ENCODE measurements at regions of chr3 and their contacts with region 1.

Region 1: DNA sequence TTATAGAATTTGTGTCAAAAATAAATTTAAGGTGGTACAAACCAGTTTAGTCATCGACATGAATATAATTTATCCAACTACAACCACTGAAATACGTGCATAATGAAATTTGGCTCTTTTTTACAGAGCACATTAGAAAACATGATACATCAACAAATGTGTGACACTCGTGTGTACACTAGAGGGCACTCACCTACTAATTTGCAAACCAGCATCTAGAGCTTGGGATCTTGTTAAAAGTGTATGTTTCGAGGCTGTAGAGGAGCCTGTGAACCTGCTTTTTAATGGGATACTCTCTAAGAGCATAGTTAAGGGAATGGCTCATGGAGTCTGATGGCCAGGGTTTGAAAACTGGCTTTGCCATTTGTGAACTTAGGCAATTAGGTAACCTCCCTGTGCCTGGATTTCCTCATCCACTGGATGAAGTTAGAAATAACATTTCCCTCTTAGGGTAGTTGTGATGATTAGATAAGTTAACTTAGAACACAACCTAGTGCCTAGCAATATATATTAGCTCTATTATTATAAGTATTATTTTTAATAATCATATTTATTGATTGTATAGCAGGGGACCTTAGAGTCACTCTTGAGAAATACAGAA is 8.8 kb upstream of the CPOX start:
- DNase-seq: no peak
- ATAC-seq: peak; percentile 63 to 88 (median 66)
- H3K4me3 ChIP-seq: no peak overlapping the region
- H3K27ac ChIP-seq: no peak overlapping the region
- H3K4me1 ChIP-seq: no peaks in the 10 kb centered on the region
- H3K27me3 ChIP-seq: no peaks in the 10 kb centered on the region
- CTCF ChIP-seq: peak; percentile 74

Region 2: DNA sequence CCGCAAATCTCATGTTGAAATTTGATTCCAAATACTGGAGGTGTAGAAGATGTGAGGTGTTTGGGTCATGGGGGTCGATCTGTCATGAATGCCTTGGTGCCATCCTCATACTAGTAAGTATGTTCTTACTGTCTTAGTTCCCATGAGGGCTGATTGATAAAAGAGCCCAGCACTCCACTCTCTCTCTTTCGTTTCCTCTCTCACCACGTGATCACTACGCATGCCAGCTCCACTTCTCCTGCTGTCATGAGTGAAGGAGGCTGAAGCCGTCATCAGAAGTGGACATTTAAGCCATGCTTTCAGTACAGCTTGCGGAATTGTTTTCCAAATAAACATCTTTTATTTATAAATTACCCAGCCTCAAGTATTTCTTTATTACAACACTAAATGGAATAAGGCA is 429.6 kb before region 1 on chr3:
- intact Hi-C with region 1: no loop called
- DNase-seq: no peak
- ATAC-seq: no peak
- H3K4me3 ChIP-seq: no peak overlapping the region
- H3K27ac ChIP-seq: no peak overlapping the region
- H3K4me1 ChIP-seq: no peaks in the 10 kb centered on the region
- H3K27me3 ChIP-seq: no peaks in the 10 kb centered on the region
- CTCF ChIP-seq: no peak

Region 3: GRCh38 chr3:98433764-98434163 is 168.4 kb before region 1 on chr3:
- intact Hi-C with region 1: no loop called
- DNase-seq: no peak
- ATAC-seq: no peak
- H3K4me3 ChIP-seq: no peak overlapping the region
- H3K27ac ChIP-seq: no peak overlapping the region
- H3K4me1 ChIP-seq: no peaks in the 10 kb centered on the region
- H3K27me3 ChIP-seq: no peaks in the 10 kb centered on the region
- CTCF ChIP-seq: no peak

Region 4: DNA sequence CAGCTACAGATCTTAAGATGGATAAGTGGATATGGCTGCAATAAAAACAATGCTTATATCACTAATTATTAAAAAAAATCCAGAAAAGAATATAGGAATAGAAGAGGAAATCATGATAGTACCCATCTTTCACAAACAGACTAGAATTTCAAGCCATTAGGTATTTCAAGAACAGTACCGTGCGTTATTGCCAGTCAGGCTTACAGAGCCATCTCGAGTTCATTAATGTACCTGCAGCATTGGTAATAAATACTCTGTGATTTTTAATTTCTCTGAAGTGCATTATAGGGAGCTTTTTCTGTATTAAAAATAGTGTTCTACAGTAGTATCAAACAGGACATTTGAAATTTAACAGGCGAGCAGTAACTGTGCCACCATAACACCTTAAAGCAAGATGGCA is 196.6 kb after region 1 on chr3:
- intact Hi-C with region 1: loop called in 1 of 2 experiments (anchors 5 kb)
- DNase-seq: no peak
- ATAC-seq: peak in 3 of 4 donors; percentile 49 to 77 (median 57)
- H3K4me3 ChIP-seq: no peak overlapping the region
- H3K27ac ChIP-seq: no peak overlapping the region
- H3K4me1 ChIP-seq: no peaks in the 10 kb centered on the region
- H3K27me3 ChIP-seq: no peaks in the 10 kb centered on the region
- CTCF ChIP-seq: peak; percentile 41

Region 5: GRCh38 chr3:98811048-98811447 is 208.9 kb after region 1 on chr3:
- intact Hi-C with region 1: loop called (anchors 2 to 5 kb)
- DNase-seq: no peak
- ATAC-seq: no peak
- H3K4me3 ChIP-seq: no peak overlapping the region
- H3K27ac ChIP-seq: no peak overlapping the region
- H3K4me1 ChIP-seq: no peaks in the 10 kb centered on the region
- H3K27me3 ChIP-seq: no peaks in the 10 kb centered on the region
- CTCF ChIP-seq: no peak

Region 6: GRCh38 chr3:98817547-98818041 is 215.4 kb after region 1 on chr3:
- intact Hi-C with region 1: loop called in 1 of 2 experiments (anchors 5 kb)
- DNase-seq: no peak
- ATAC-seq: peak; percentile 73 to 89 (median 74)
- H3K4me3 ChIP-seq: no peak overlapping the region
- H3K27ac ChIP-seq: no peak overlapping the region
- H3K4me1 ChIP-seq: no peaks in the 10 kb centered on the region
- H3K27me3 ChIP-seq: no peaks in the 10 kb centered on the region
- CTCF ChIP-seq: peak; percentile 83

Region 7: GRCh38 chr3:98994128-98994762 is 392.1 kb after region 1 on chr3:
- intact Hi-C with region 1: loop called (anchors 5 kb)
- DNase-seq: no peak
- ATAC-seq: peak in 1 of 4 donors; percentile 46
- H3K4me3 ChIP-seq: no peak overlapping the region
- H3K27ac ChIP-seq: no peak overlapping the region
- H3K4me1 ChIP-seq: no peaks in the 10 kb centered on the region
- H3K27me3 ChIP-seq: no peaks in the 10 kb centered on the region
- CTCF ChIP-seq: peak; percentile 74

Region 8: DNA sequence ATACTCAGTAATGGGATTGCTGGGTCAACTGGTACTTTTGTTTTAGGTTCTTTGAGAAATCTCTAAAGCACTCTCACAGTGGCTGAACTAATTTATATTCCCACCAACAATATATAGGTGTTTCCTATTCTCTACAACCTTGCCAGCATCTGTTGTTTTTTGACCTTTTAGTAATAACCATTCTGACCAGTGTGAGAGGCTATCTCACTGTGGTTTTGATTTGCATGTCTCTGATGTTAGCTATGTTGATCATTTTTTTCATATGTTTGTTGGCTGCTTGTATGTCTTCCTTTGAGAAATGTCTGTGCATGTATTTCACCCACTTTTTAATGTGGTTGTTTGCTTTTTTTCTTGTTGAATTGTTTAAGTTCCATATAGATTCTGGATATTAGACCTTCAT is 397.5 kb after region 1 on chr3:
- intact Hi-C with region 1: loop called (anchors 5 kb)
- DNase-seq: no peak
- ATAC-seq: no peak
- H3K4me3 ChIP-seq: no peak overlapping the region
- H3K27ac ChIP-seq: no peak overlapping the region
- H3K4me1 ChIP-seq: no peaks in the 10 kb centered on the region
- H3K27me3 ChIP-seq: no peaks in the 10 kb centered on the region
- CTCF ChIP-seq: no peak